H1 (cell line): ENCODE measurements at regions of chr11 and their contacts with region 1.

Region 1: DNA sequence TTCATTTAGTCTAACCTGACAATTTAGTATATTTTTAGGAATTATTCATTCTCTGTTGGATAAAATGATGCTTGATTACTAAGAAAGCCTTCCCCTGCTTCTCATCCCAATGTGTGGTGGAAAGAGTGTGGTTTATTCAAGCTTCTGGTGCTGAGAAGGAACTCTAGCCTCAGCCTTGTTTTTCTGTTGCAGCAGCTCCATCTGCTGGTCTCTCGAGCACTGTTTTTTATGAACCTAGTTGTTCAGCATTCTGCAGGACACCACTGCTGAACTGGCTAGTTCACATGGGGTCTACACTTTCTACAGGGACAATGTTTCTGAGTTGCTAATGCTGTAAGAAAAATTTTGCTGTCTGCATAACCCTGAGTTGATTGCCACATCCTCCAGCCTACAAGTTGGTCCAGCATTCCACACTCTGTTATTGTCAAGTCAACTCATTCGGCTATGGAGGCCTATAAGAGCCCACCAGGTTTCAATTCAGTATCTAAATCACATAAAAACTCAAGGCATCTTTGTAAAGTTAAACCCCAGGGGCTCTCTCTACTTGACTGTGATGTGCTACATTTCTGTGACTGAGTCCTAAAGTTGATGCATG is 14.3 kb downstream of the OR2AG2 start:
- DNase-seq: peak in 1 of 2 experiments; percentile 48
- H3K4me3 ChIP-seq: no peak overlapping the region
- H3K27ac ChIP-seq: no peak overlapping the region
- H3K4me1 ChIP-seq: no peaks in the 10 kb centered on the region
- H3K27me3 ChIP-seq: no peaks in the 10 kb centered on the region
- CTCF ChIP-seq: peak; percentile 10 to 81 (median 77)
- EP300 ChIP-seq: no peak
- POLR2A ChIP-seq: no peak
- RAD21 ChIP-seq: peak; percentile 71 to 80

Region 2: GRCh38 chr11:6419009-6419631 is 338.4 kb before region 1 on chr11 and contains the start of gene APBB1:
- CTCF ChIA-PET with region 1: no interaction called
- POLR2A ChIA-PET with region 1: no interaction called
- DNase-seq: peak in 1 of 2 experiments; percentile 81
- H3K4me3 ChIP-seq: peak within 1 kb of the TSS; percentile 78 to 97 (median 86)
- H3K27ac ChIP-seq: no peak within 1 kb of the TSS
- H3K4me1 ChIP-seq: peaks cover 2 to 5% (median 4%) of the 10 kb centered on the region in 4 experiments; a peak in 4 of 7 replicates
- H3K27me3 ChIP-seq: peaks cover 1 to 13% (median 7%) of the 10 kb centered on the region in 4 experiments
- CTCF ChIP-seq: no peak
- EP300 ChIP-seq: no peak
- POLR2A ChIP-seq: peak in 1 of 2 experiments; percentile 65; a peak in 2 of 3 replicates
- RAD21 ChIP-seq: no peak
- total RNA-seq, gene APBB1: 23.6 and 23.9 TPM in 2 replicates

Region 3: DNA sequence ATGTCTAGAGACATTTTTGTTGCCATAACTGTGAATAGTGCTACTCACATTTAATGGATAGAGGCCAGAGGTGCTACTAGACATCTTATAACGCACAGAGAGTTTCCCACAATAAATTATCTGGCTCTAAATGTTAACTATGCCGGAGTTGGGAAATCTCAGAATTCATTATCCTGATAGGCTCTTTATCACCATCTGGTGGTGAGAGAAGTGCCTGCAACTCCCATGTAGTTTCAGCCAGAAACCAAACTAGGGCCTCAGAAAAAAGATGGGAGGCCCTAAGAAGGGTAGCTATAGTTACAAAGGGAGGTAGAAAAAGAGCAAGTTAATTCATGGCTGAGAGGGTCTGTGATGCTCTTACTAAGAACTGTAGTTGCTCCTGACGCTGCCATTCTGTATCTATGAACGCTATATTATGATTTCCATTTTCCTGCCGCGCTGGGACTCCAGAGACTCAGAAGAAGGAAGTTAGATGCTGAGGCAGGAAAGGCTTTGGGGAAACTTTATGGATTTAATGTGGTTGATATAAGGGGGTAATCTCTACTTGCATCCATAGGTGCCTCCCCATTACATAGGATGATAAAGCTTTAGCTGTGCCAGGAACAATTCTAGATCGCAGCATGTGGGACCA is 51.5 kb before region 1 on chr11:
- CTCF ChIA-PET with region 1: interaction called, 19 read pairs
- POLR2A ChIA-PET with region 1: no interaction called
- DNase-seq: peak in 1 of 2 experiments; percentile 64
- H3K4me3 ChIP-seq: no peak overlapping the region
- H3K27ac ChIP-seq: no peak overlapping the region
- H3K4me1 ChIP-seq: no peaks in the 10 kb centered on the region
- H3K27me3 ChIP-seq: peaks cover 0 to 2% (median 0%) of the 10 kb centered on the region in 4 experiments; a peak in 1 of 7 replicates
- CTCF ChIP-seq: peak in 2 of 3 experiments; percentile 77 to 80; a peak in 3 of 4 replicates
- EP300 ChIP-seq: no peak
- POLR2A ChIP-seq: no peak
- RAD21 ChIP-seq: peak; percentile 64 to 71

Region 4: DNA sequence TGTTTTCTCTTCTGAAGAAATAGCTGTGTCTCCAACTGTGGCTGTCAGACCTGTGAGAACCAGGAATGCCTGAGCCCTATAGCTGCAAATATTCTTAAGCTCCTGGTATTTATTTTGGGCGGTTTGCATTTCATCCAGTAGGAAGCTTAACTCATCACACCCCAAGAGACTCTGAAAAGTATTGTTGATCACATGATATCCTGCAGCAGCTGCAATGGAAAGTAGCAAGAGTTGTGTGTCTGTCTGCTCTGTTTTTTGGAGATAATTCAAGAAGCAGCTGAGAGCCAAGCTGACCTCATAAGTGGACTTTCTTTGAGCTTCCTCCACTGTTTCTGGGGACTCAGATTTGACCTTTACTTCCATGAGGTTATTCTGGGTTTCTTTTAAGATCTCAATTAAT is 37.9 kb before region 1 on chr11:
- CTCF ChIA-PET with region 1: interaction called, 28 read pairs
- POLR2A ChIA-PET with region 1: no interaction called
- DNase-seq: no peak
- H3K4me3 ChIP-seq: no peak overlapping the region
- H3K27ac ChIP-seq: no peak overlapping the region
- H3K4me1 ChIP-seq: no peaks in the 10 kb centered on the region
- H3K27me3 ChIP-seq: no peaks in the 10 kb centered on the region
- CTCF ChIP-seq: no peak
- EP300 ChIP-seq: no peak
- POLR2A ChIP-seq: no peak
- RAD21 ChIP-seq: no peak

Region 5: GRCh38 chr11:6727971-6728760 is 29.3 kb before region 1 on chr11:
- CTCF ChIA-PET with region 1: interaction called, 110 read pairs
- POLR2A ChIA-PET with region 1: no interaction called
- DNase-seq: no peak
- H3K4me3 ChIP-seq: no peak overlapping the region
- H3K27ac ChIP-seq: no peak overlapping the region
- H3K4me1 ChIP-seq: no peaks in the 10 kb centered on the region
- H3K27me3 ChIP-seq: no peaks in the 10 kb centered on the region
- CTCF ChIP-seq: no peak
- EP300 ChIP-seq: no peak
- POLR2A ChIP-seq: no peak
- RAD21 ChIP-seq: no peak

Region 6: DNA sequence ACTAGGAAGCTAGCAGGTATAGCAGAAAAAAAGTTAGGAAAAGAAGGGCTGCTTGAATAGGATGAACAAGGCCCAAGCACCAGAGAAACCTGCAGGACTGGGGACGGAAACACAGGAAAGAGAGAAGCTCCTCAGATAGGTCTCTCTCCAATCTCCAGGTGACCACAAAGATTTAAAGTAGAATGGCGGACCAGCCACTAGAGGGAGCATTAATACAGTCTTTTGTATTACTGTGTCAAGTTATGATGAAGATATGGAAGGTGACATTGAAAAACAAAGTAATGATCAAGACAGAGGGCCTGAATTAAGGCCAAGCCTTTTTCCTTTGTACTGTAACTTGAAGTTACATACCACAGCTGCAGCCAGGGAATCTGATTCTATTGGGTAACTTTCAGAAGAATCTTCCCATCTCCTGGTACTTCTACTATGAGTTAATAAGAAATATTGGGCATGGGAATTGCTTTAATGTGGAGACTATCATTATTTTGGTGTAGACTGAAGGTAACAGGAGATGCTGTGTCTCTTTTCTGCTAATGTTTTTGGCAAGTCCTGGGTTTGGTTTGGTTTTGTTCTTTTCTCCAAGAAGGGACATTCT is 19.5 kb before region 1 on chr11:
- CTCF ChIA-PET with region 1: interaction called, 110 read pairs
- POLR2A ChIA-PET with region 1: no interaction called
- DNase-seq: peak in 1 of 2 experiments; percentile 47
- H3K4me3 ChIP-seq: no peak overlapping the region
- H3K27ac ChIP-seq: no peak overlapping the region
- H3K4me1 ChIP-seq: no peaks in the 10 kb centered on the region
- H3K27me3 ChIP-seq: no peaks in the 10 kb centered on the region
- CTCF ChIP-seq: peak in 2 of 3 experiments; percentile 43 to 62; a peak in 2 of 4 replicates
- EP300 ChIP-seq: no peak
- POLR2A ChIP-seq: no peak
- RAD21 ChIP-seq: peak; percentile 48 to 56

Region 7: GRCh38 chr11:6746086-6746618 is 11.3 kb before region 1 on chr11:
- CTCF ChIA-PET with region 1: interaction called, 86 read pairs
- POLR2A ChIA-PET with region 1: no interaction called
- DNase-seq: no peak
- H3K4me3 ChIP-seq: no peak overlapping the region
- H3K27ac ChIP-seq: no peak overlapping the region
- H3K4me1 ChIP-seq: no peaks in the 10 kb centered on the region
- H3K27me3 ChIP-seq: no peaks in the 10 kb centered on the region
- CTCF ChIP-seq: no peak
- EP300 ChIP-seq: no peak
- POLR2A ChIP-seq: no peak
- RAD21 ChIP-seq: no peak

Region 8: GRCh38 chr11:6771926-6772893 is 14.7 kb after region 1 on chr11 and contains the start of gene OR2AG2:
- CTCF ChIA-PET with region 1: interaction called, 36 read pairs
- POLR2A ChIA-PET with region 1: no interaction called
- DNase-seq: no peak
- H3K4me3 ChIP-seq: no peak within 1 kb of the TSS
- H3K27ac ChIP-seq: no peak within 1 kb of the TSS
- H3K4me1 ChIP-seq: no peaks in the 10 kb centered on the region
- H3K27me3 ChIP-seq: no peaks in the 10 kb centered on the region
- CTCF ChIP-seq: no peak
- EP300 ChIP-seq: no peak
- POLR2A ChIP-seq: no peak
- RAD21 ChIP-seq: no peak
- total RNA-seq, gene OR2AG2: 0.17 and 0.22 TPM in 2 replicates